ENCODE measurements at regions of chr6 and their contacts with region 1.

Region 1: GRCh38 chr6:169520104-169520503 is 181.7 kb downstream of the WDR27 start:
- DNase-seq: no peak
- ATAC-seq: no peak

Region 2: DNA sequence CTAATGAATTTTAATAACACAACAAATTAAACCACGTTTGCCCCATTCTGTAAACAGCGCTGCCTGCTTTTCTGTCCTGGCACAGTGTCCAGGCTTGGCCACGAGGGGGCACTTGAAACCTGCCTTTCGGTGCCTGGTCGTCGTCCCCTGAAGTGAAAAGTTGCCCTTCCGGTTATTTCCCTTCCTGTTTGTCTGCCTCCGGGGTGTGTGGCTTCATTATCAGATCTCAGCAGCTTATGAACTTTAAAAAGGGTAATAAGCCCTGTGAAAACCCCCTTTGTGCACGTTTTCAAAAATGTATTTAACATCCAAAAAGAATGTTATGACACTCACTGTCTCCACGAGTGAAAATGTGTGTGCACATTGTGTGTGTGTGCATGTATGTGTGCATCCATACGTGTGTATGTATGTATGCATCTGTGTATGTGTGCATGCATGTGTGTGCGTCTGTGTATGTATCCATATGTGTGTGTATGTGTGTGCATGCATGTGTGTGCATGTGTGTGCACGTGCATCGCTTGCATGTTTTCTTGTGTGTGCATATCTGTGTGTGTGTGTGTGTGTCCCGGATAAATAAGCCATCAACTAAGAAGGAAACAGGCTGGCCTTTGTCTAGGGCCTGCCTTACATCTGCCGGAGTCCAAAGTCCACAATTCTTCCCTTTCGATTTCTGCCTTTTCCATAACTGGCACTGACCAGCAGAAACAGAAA is 624.8 kb before region 1 on chr6:
- intact Hi-C with region 1: loop called (anchors 5 kb)
- DNase-seq: no peak
- ATAC-seq: peak; percentile 84

Region 3: DNA sequence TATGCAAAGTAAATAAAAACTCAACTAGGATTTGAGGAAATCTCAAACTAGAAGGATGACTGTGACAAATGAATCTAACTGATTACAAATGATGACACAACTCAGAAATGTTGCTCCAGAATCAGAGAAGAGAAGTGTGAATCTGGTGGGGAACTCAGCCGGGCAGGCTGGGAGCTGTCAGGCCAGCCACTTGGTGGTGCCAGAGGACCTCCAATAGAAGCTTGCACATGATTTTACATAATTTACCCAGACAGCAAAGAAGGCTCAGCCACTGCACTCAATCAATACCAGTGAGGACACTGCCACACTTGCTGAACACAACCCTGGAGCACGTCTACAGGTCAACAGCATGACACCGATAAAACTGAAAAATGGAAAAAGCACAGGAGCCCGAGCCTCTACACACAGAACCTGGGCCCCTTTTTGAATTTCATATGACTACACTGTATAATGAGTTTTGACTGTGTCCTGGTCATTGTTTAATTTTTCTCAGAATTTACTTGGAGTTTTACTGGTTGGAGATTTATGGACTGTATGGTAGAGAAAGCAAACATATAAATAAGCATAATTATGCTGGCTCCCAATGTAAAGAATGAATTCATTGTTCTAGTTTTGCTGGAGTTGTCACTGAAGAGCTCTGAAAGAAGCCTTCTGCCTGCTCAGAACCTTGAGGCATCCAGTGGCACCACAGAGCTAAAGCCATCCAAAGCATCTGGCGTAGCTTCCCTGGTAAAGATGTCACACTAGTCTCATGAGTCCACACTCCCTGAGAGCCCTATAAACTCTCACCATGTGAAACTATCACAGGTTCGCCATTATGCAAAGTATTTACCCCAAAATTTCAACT is 563.0 kb before region 1 on chr6:
- intact Hi-C with region 1: loop called (anchors 5 kb)
- DNase-seq: no peak
- ATAC-seq: peak; percentile 81

Region 4: DNA sequence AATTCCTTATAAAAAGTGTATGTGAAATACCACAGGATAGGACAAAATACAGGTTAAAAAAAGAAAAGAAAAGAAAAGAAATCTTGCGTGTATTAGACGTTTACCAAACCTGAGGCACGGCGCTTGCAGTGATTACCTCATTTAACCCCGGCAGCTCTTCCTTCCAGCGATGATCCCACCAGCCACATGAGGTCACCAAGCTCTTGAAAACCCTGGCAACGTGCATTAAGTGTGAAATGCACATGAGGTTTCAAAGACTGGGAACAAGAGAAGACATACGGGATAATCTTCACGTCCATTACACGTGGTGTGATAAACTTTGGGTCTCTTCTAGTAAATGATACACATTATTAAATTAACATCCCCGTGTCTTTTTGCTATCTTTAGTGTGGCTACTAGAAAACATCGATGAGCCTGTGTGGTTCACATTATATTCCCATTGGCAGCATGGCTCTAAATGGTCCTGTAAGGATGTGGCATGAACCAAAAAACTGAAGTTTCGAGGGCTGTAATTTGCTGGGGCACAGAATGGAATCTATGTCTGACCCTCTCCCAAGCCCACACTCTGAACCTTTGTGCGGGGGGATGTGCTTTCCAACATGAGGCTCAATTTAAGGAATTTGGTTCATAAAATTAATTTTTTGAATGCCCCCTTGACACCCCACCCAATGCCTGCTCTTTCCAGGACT is 207.3 kb before region 1 on chr6:
- intact Hi-C with region 1: no loop called
- DNase-seq: no peak
- ATAC-seq: peak; percentile 63

Measured in Right ventricle myocardium inferior (tissue), 1 donor.